ENCODE measurements at regions of chr11 and their contacts with region 1.

Region 1: GRCh38 chr11:66051766-66052663 is at the start of gene SF3B2:
- DNase-seq: peak; percentile 93 to 96 (median 96)
- H3K4me3 ChIP-seq: peak within 1 kb of the TSS; percentile 91 to 99
- H3K4me3 Mint-ChIP-seq: peak within 1 kb of the TSS; percentile 99 to 100 (median 100)
- H3K27ac ChIP-seq: peak within 1 kb of the TSS; percentile 81
- H3K27ac Mint-ChIP-seq: peak within 1 kb of the TSS; percentile 98 to 100 (median 99)
- H3K4me1 ChIP-seq: peaks cover 23% of the 10 kb centered on the region
- H3K4me1 Mint-ChIP-seq: peaks cover 12 to 40% (median 25%) of the 10 kb centered on the region in 4 donors
- H3K27me3 ChIP-seq: no peaks in the 10 kb centered on the region
- H3K27me3 Mint-ChIP-seq: peaks cover 0 to 1% of the 10 kb centered on the region in 2 donors
- total RNA-seq, gene SF3B2: 238 to 240 TPM

Region 2: GRCh38 chr11:65919146-65920033 is 132.6 kb before region 1 on chr11 and contains the start of gene DRAP1:
- CTCF ChIA-PET with region 1: no interaction called
- POLR2A ChIA-PET with region 1: no interaction called
- intact Hi-C with region 1: loop called (anchors 1 kb)
- DNase-seq: peak; percentile 97 to 99 (median 98)
- H3K4me3 ChIP-seq: peak within 1 kb of the TSS; percentile 76 to 89
- H3K4me3 Mint-ChIP-seq: peak within 1 kb of the TSS; percentile 89 to 95 (median 92)
- H3K27ac ChIP-seq: peak within 1 kb of the TSS; percentile 86
- H3K27ac Mint-ChIP-seq: peak within 1 kb of the TSS; percentile 89 to 95 (median 93)
- H3K4me1 ChIP-seq: peaks cover 52% of the 10 kb centered on the region
- H3K4me1 Mint-ChIP-seq: peaks cover 15 to 63% (median 39%) of the 10 kb centered on the region in 4 donors
- H3K27me3 ChIP-seq: no peaks in the 10 kb centered on the region
- H3K27me3 Mint-ChIP-seq: no peaks in the 10 kb centered on the region
- total RNA-seq, gene DRAP1: 78.2 to 78.7 TPM

Region 3: DNA sequence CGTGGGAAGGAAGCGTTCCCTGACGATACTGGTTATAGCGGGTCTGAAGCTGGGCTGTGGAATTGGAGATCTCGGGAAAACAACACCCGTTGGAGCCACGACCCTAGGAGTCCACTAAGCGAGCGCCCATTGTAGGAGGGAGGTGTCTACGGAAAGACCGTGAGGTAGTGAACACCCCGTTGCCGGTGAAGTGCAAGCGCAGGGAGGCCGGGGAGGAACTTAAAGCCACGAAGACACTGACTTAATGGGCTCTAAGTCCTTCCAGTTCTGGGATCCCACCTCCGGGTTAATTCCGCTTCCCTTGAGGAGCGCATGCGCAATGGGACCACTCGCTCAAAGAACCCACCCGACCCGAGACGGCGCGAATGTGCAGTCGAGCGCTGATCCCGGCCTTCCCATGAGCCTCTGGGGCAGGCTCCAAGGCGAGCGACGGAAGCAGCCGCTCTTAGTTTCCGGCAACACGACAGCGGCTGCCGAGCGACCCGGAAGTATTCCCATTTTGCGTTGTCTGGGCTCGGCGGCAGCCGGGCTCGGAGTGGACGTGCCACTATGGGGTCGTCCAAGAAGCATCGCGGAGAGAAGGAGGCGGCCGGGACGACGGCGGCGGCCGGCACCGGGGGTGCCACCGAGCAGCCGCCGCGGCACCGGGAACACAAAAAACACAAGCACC is 90.6 kb before region 1 on chr11 and contains the start of gene SART1:
- CTCF ChIA-PET with region 1: no interaction called
- POLR2A ChIA-PET with region 1: no interaction called
- intact Hi-C with region 1: loop called (anchors 1 kb)
- DNase-seq: peak; percentile 92 to 98 (median 95)
- H3K4me3 ChIP-seq: peak within 1 kb of the TSS; percentile 70 to 79
- H3K4me3 Mint-ChIP-seq: peak within 1 kb of the TSS; percentile 98 to 99 (median 98)
- H3K27ac ChIP-seq: peak within 1 kb of the TSS; percentile 96
- H3K27ac Mint-ChIP-seq: peak within 1 kb of the TSS; percentile 92 to 100 (median 99)
- H3K4me1 ChIP-seq: peaks cover 42% of the 10 kb centered on the region
- H3K4me1 Mint-ChIP-seq: peaks cover 31 to 61% (median 39%) of the 10 kb centered on the region in 4 donors
- H3K27me3 ChIP-seq: no peaks in the 10 kb centered on the region
- H3K27me3 Mint-ChIP-seq: no peaks in the 10 kb centered on the region
- total RNA-seq, gene SART1: 83.9 to 90.6 TPM

Region 4: GRCh38 chr11:66001942-66002647 is 49.9 kb before region 1 on chr11 and contains the starts of genes BANF1 and EIF1AD:
- CTCF ChIA-PET with region 1: no interaction called
- POLR2A ChIA-PET with region 1: interaction called, 18 read pairs
- intact Hi-C with region 1: loop called (anchors 1 kb)
- DNase-seq: peak; percentile 95 to 97 (median 96)
- H3K4me3 ChIP-seq: peak within 1 kb of the TSS; percentile 68 to 82
- H3K4me3 Mint-ChIP-seq: peak within 1 kb of the TSS; percentile 94 to 100 (median 99)
- H3K27ac ChIP-seq: peak within 1 kb of the TSS; percentile 87
- H3K27ac Mint-ChIP-seq: peak within 1 kb of the TSS; percentile 96 to 99 (median 99)
- H3K4me1 ChIP-seq: peaks cover 26% of the 10 kb centered on the region
- H3K4me1 Mint-ChIP-seq: peaks cover 12 to 49% (median 27%) of the 10 kb centered on the region in 4 donors
- H3K27me3 ChIP-seq: no peaks in the 10 kb centered on the region
- H3K27me3 Mint-ChIP-seq: no peaks in the 10 kb centered on the region
- total RNA-seq, gene BANF1: 90.8 to 92.9 TPM
- total RNA-seq, gene EIF1AD: 60.2 to 65.4 TPM

Region 5: DNA sequence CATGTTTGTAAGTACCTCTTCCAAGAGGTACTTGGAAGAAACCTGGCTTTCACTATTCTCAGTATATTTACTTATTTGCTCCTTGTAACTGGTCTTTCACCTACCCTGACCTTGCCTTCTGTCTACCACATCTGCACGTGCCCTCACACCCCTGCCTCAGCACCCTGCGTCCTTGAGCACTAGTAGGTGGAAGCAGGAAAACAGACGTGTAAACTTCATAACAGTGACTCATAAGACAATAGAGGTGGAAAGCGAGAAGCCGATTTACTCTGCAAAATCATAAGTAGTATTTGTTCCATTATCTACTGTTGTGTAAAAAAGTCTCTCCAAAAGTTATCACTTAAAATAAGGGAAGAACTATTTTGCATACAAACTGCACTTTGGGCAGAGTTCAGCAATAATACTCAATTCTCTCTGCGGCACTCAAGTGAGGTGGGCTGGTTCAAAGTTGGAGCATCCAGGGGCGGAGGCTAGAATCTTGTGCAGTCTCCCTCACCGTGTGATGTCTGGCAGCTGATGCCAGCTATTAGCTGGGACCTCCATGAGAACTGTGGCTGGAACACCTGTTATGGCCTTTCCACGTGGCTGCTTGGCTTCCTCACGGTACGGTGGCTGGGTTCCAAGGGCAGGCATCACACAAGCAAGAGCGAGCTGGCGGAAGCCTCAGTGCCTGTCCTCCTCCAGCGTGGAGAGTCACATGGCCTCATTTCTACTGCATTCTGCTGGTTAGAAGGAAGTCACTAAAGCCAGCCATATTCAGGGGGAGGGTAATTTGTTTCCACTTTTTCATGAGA is 48.5 kb after region 1 on chr11:
- CTCF ChIA-PET with region 1: no interaction called
- POLR2A ChIA-PET with region 1: interaction called, 10 read pairs
- intact Hi-C with region 1: no loop called
- DNase-seq: peak; percentile 72 to 89 (median 80)
- H3K4me3 ChIP-seq: peak overlapping the region; percentile 32 to 46
- H3K4me3 Mint-ChIP-seq: peak overlapping the region; percentile 75 to 87 (median 80)
- H3K27ac ChIP-seq: peak overlapping the region; percentile 57
- H3K27ac Mint-ChIP-seq: peak overlapping the region; percentile 76 to 98 (median 96)
- H3K4me1 ChIP-seq: peaks cover 76% of the 10 kb centered on the region
- H3K4me1 Mint-ChIP-seq: peaks cover 51 to 79% (median 60%) of the 10 kb centered on the region in 4 donors
- H3K27me3 ChIP-seq: no peaks in the 10 kb centered on the region
- H3K27me3 Mint-ChIP-seq: no peaks in the 10 kb centered on the region

Region 6: DNA sequence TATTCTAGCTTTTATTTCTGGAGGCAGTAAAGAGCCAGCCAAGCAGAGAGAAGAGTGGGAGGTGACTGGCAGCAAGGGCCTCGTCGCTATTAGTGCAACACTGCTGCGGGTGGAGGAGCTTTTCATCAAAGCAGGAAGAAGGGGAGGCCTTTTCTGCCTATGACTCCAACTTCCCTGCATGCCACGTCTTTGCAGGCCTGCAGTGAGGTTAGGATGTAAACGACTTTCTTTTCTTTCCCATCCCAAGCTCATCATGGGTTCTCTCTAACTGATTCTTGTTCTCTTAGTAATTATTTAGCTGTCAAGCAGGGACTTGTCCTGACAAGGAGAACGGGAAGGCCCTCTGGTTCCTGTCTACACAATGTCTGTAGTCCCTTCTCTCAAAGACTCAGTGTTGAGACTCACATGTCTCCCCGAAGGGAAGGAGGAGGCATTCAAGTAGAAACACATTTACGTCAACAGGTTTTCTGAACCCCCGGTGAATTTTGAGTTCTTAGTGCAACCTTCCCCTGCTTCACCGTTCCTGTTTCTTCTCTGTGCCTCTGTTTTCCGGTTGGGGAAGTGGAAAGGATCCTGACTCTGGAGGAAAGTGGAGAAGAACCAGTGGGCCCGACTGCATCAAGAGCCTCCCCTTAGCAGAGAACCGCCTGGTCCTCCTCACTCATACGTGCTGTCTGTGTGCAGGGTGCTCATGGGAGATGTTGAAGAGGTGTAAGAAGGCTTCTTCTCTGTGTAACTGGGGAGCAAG is 75.0 kb after region 1 on chr11:
- CTCF ChIA-PET with region 1: no interaction called
- POLR2A ChIA-PET with region 1: interaction called, 12 read pairs
- intact Hi-C with region 1: no loop called
- DNase-seq: peak; percentile 57 to 80 (median 64)
- H3K4me3 ChIP-seq: peak overlapping the region; percentile 2 to 14
- H3K4me3 Mint-ChIP-seq: peak overlapping the region; percentile 53 to 90 (median 78)
- H3K27ac ChIP-seq: peak overlapping the region; percentile 49
- H3K27ac Mint-ChIP-seq: peak overlapping the region; percentile 92 to 98 (median 95)
- H3K4me1 ChIP-seq: peaks cover 74% of the 10 kb centered on the region
- H3K4me1 Mint-ChIP-seq: peaks cover 65 to 81% (median 72%) of the 10 kb centered on the region in 4 donors
- H3K27me3 ChIP-seq: no peaks in the 10 kb centered on the region
- H3K27me3 Mint-ChIP-seq: no peaks in the 10 kb centered on the region

Region 7: GRCh38 chr11:66136752-66137123 is 84.7 kb after region 1 on chr11:
- CTCF ChIA-PET with region 1: interaction called, 39 read pairs
- POLR2A ChIA-PET with region 1: no interaction called
- intact Hi-C with region 1: no loop called
- DNase-seq: peak in 1 of 5 donors; percentile 48
- H3K4me3 ChIP-seq: no peak overlapping the region
- H3K4me3 Mint-ChIP-seq: no peak overlapping the region
- H3K27ac ChIP-seq: no peak overlapping the region
- H3K27ac Mint-ChIP-seq: peak overlapping the region in 5 of 7 donors; percentile 32 to 81 (median 46)
- H3K4me1 ChIP-seq: peaks cover 48% of the 10 kb centered on the region
- H3K4me1 Mint-ChIP-seq: peaks cover 34 to 70% (median 54%) of the 10 kb centered on the region in 4 donors
- H3K27me3 ChIP-seq: no peaks in the 10 kb centered on the region
- H3K27me3 Mint-ChIP-seq: no peaks in the 10 kb centered on the region

Measured in CD4-positive, alpha-beta memory T cell (primary cell).